ENCODE measurements at regions of chr5 and their contacts with region 1.

Region 1: GRCh38 chr5:175889910-175890684 is 18.7 kb downstream of the CPLX2 start:
- DNase-seq: no peak
- H3K4me3 ChIP-seq: no peak overlapping the region
- H3K27ac ChIP-seq: no peak overlapping the region
- H3K4me1 ChIP-seq: peaks cover 0 to 6% (median 3%) of the 10 kb centered on the region in 4 experiments; a peak in 5 of 7 replicates
- H3K27me3 ChIP-seq: no peaks in the 10 kb centered on the region
- CTCF ChIP-seq: no peak
- EP300 ChIP-seq: no peak
- POLR2A ChIP-seq: no peak
- RAD21 ChIP-seq: no peak

Region 2: DNA sequence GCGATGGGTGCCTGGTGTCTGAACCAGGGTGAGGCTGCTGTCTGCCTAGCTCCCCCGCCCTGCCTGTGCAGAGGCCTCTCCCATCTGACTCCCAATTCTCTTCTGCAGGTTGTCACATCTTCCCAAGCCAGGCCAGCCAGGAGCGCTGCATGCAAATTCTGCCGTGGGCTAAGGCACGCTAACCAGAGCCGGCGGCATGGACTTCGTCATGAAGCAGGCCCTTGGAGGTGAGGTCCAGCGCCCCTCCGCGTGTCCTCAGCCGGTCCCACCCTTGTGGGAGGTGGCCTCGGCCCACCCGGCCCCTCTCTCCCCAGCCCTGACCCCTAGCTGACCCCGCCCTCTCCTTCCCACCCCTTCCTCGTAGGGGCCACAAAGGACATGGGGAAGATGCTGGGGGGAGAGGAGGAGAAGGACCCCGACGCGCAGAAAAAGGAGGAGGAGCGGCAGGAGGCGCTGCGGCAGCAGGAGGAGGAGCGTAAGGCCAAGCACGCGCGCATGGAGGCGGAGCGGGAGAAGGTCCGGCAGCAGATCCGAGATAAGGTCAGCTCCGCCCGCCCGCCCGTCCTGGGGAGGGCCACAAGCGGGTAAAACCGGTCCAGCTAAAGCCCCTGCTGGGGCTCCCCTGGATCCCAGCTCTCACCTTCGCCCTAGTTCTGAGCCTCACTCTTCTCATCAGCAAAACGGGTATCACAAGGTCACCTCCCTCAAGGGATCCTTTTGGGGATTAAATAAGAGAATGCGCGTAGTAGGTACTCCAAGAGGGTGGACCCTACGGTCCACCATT is 11.4 kb before region 1 on chr5:
- CTCF ChIA-PET with region 1: interaction called, 71 read pairs
- POLR2A ChIA-PET with region 1: no interaction called
- DNase-seq: peak in 1 of 2 experiments; percentile 71
- H3K4me3 ChIP-seq: peak overlapping the region in 3 of 4 experiments; percentile 8 to 46 (median 23); a peak in 5 of 8 replicates
- H3K27ac ChIP-seq: no peak overlapping the region
- H3K4me1 ChIP-seq: peaks cover 0 to 16% (median 2%) of the 10 kb centered on the region in 4 experiments; a peak in 6 of 7 replicates
- H3K27me3 ChIP-seq: peaks cover 0 to 6% (median 1%) of the 10 kb centered on the region in 4 experiments; a peak in 3 of 7 replicates
- CTCF ChIP-seq: peak; percentile 13 to 38 (median 15); a peak in 3 of 4 replicates
- EP300 ChIP-seq: no peak
- POLR2A ChIP-seq: no peak
- RAD21 ChIP-seq: peak in 1 of 2 experiments; percentile 15; a peak in 1 of 4 replicates

Region 3: DNA sequence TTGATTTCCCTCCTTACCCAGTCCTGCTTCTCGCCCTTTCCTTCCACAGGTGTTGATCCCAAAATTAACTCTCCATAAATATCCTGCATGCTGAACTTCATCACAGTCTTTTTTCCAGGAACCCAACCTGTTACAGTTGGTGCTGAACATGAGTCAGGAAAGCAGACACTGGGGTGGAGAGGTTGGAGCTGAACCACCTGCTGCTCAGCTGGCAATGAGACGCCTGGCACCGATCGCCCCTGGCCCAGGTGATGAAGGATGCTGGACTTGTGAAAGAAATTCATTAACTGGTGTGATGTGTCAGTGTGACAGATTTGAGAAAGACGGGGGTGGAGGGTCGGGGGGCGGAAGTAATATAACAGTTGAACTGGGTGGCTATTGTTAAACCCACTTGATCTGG is 11.9 kb after region 1 on chr5:
- CTCF ChIA-PET with region 1: interaction called, 11 read pairs
- POLR2A ChIA-PET with region 1: no interaction called
- DNase-seq: no peak
- H3K4me3 ChIP-seq: no peak overlapping the region
- H3K27ac ChIP-seq: no peak overlapping the region
- H3K4me1 ChIP-seq: no peaks in the 10 kb centered on the region; a peak in 1 of 7 replicates
- H3K27me3 ChIP-seq: no peaks in the 10 kb centered on the region
- CTCF ChIP-seq: no peak
- EP300 ChIP-seq: no peak
- POLR2A ChIP-seq: no peak
- RAD21 ChIP-seq: no peak

Measured in H1 (cell line).